Common myeloid progenitor, CD34-positive (primary cell): ENCODE measurements at regions of chr5 and their contacts with region 1.

Region 1: DNA sequence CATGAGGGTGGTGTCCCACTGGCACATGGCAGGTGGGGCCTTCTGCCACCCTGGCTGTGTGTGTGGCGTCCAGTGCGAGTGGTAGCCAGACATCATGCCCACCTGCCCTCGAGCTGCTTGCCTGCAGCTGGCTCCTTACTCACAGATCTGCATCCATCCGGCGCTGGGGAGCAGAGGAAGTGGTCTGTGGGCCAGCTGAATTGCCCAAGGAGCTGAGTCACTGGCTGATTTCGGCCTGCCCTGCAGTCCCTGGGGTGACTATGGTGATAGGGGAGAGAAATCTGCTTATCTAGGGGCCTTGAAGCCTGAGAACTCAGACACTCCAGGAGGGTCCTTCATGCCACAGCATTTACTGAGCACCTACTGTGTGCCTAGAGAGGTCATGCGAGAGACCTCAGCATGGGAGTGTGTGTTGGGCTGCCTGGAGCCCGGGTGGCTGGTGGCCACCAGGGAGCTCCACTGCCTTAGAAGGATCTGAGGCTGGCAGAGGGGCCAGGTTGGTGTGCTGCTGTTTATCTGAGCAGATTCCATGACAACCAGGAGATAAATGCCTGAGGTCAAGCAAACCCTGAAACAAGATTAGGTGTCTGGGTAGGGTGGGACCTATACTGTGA is 57.1 kb downstream of the SLC22A5 start:
- DNase-seq: peak; percentile 92 to 99 (median 99)
- H3K4me3 ChIP-seq: peak overlapping the region in 2 of 7 experiments; percentile 21 to 34
- H3K27ac ChIP-seq: peak overlapping the region; percentile 82 to 93
- H3K4me1 ChIP-seq: peaks cover 82 to 99% (median 99%) of the 10 kb centered on the region in 4 experiments
- H3K27me3 ChIP-seq: no peaks in the 10 kb centered on the region

Region 2: DNA sequence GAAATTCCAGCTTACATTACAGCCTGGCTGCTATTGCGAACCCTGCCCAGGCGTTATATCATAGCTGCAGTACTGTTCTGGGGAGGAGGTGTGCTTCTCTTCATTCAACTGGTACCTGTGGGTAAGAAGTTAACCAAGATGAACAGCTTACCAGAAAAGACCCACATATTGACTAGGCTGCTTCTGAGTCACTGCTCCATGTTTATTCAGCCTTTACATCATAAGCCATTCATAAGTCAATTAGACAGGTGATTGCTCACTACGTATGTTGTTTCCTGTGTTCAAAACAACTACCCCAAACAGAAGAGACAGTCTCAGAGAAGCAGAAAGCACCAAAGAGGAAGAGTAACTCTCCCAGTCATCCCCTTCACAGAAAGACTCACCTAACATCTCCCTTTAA is 91.8 kb before region 1 on chr5:
- CTCF ChIA-PET with region 1: no interaction called
- POLR2A ChIA-PET with region 1: no interaction called
- DNase-seq: peak in 2 of 3 donors; percentile 12 to 31
- H3K4me3 ChIP-seq: no peak overlapping the region
- H3K27ac ChIP-seq: no peak overlapping the region
- H3K4me1 ChIP-seq: no peaks in the 10 kb centered on the region
- H3K27me3 ChIP-seq: no peaks in the 10 kb centered on the region

Region 3: DNA sequence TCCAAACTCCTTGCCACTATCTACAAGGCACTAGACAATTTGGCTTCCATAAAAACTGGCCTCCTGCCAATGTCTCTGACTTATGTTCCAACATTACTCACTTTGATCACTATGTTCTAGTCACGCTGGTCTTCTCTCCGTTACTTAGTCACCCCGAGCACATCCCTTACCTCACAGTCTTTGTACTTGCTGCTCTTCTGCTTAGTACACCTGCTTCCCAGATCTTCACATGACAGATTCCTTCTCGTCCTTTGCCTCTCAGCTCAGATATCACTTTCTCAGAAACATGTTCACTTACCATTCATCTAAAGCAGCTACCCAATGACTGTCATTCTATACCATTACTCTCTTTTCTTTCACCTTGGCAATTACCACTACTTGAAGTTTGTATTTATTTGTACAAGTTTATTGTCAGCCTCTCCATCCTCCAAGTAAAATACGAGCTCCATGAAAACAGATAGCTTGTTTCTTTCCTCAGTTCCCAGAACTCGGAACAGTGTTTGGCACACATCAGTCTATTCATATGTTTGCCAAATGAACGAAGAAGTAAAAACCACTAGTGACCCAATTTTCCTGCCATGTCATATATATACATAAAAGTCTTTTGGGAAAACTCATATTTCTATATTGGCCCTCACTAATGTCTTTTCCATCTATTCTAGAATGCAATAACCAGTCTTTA is 63.1 kb before region 1 on chr5:
- CTCF ChIA-PET with region 1: no interaction called
- POLR2A ChIA-PET with region 1: no interaction called
- DNase-seq: no peak
- H3K4me3 ChIP-seq: no peak overlapping the region
- H3K27ac ChIP-seq: no peak overlapping the region
- H3K4me1 ChIP-seq: no peaks in the 10 kb centered on the region
- H3K27me3 ChIP-seq: no peaks in the 10 kb centered on the region

Region 4: GRCh38 chr5:132437604-132438266 is 11.1 kb after region 1 on chr5:
- CTCF ChIA-PET with region 1: interaction called, 105 read pairs
- POLR2A ChIA-PET with region 1: interaction called, 4 read pairs
- DNase-seq: peak in 2 of 3 donors; percentile 62 to 72
- H3K4me3 ChIP-seq: peak overlapping the region in 1 of 7 experiments; percentile 10
- H3K27ac ChIP-seq: peak overlapping the region; percentile 37 to 75
- H3K4me1 ChIP-seq: peaks cover 16 to 74% (median 62%) of the 10 kb centered on the region in 4 experiments
- H3K27me3 ChIP-seq: no peaks in the 10 kb centered on the region

Region 5: DNA sequence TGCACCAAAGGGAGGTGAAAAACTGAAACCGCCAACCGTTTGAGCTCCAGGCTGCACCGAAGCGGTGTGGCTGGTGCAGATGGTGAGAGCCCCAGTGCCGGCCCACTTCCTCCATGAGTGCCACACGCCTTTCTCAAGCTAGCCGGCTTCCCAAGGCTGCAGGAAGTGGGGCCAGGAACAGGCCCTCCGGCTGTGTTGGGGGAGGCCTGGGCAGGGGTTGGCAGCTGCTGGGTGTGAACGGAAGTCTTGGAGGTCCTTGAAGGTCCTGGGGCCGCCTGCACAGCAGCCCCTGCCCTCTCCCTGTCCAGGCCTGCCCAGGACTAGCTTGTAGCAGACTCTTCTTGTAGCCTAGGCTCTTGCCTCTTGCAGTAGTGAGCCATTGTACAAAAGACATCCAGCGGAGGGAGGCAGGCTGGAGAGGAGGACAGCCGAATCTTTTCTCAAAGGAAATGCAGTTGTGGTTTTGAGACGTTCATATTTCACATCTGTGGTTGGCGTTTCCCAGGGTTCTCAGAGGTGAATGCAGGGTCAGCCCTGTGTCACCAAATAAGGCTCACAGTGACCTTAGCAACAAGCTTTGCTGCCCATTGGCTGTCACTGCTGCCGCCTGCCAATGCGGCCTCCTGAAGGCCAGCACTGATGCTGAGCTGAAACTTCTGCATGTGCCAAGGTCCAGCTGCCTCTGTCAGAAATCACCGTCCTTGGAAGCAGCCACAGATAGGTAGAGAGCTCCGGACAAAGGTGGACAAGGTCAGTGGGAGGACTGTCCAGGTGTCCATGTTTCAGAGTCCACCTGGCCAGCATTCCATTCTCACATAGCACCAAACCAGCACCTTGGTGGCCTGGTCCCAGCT is 40.0 kb after region 1 on chr5:
- CTCF ChIA-PET with region 1: interaction called, 98 read pairs
- POLR2A ChIA-PET with region 1: interaction called, 26 read pairs
- DNase-seq: peak; percentile 88 to 99 (median 98)
- H3K4me3 ChIP-seq: peak overlapping the region in 4 of 7 experiments; percentile 29 to 66 (median 40)
- H3K27ac ChIP-seq: peak overlapping the region; percentile 67 to 69
- H3K4me1 ChIP-seq: peaks cover 45 to 93% (median 87%) of the 10 kb centered on the region in 4 experiments
- H3K27me3 ChIP-seq: no peaks in the 10 kb centered on the region

Region 6: DNA sequence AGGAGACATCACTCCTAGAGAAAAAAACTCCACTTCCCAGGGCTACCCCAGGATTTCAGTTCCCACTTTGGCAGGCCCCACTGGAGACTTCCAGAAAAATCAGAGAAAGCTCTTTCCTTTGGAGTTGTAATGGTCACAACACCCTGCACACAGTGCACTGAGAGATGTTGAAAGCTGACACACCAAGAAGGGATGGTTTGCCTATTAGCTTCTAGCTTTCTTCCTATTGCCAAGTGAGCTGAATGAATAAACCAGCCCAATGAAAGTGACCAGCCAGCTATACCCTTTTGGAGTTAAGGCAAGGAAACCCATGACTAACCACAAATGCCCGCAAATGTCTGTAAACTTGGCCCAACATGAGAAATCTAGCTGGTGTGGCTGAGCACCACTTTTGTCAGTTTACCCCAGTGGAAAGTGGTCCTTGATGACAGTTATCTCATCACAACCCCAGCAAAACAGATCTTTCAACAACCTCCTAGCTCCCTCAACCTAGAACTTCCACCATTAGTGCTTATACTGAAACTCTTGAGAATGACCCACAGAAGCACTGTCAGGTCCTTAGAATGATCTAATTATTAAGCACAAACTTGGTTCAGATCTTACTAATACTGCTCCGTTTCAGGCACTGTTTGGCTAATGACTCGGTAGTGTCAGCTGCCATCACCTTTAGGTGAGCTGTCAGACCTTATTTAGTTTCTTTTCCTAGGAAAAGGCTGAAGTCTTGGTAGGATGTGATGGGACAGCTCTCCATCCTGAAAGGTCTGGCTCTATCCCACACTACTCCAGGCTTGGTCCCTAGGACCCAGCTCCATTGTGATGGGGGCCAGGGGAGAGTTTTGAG is 52.7 kb after region 1 on chr5:
- CTCF ChIA-PET with region 1: interaction called, 47 read pairs
- POLR2A ChIA-PET with region 1: interaction called, 19 read pairs
- DNase-seq: peak in 1 of 3 donors; percentile 42
- H3K4me3 ChIP-seq: no peak overlapping the region
- H3K27ac ChIP-seq: no peak overlapping the region
- H3K4me1 ChIP-seq: peaks cover 3 to 40% (median 34%) of the 10 kb centered on the region in 4 experiments
- H3K27me3 ChIP-seq: no peaks in the 10 kb centered on the region

Region 7: DNA sequence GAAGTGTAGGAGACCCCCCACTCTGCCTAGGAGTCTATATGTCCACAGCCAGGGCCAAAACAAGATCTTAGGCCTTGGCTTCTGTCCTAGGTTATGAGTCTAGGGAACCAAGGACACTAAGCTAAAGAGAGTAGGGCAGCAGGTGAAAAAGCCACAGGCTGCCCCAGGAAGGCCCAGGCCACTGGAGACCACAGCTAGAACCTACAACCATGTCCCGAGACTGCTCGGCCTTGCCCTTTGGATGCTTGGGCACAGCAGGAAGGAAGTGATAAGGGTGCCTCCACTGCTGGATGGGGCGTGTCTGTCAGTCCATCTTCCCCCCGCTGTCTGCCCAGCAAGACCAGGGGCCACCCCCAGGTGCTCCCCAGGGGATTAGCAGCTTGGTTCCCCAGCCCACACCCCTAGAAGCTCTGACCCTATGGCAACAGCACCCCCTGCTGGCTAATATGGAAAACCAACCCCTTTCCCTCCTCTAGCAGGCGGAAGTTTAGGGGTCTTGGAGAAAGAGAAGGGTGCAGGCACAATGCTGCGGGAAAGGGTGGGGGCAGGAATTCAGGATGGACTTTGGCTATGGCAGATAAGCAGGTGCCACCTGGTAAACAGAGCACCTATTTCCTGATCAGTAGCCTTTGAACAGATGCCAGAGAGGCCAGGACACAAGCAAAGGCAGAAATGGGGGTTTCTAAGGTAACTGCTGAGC is 74.4 kb after region 1 on chr5:
- CTCF ChIA-PET with region 1: interaction called, 38 read pairs
- POLR2A ChIA-PET with region 1: interaction called, 6 read pairs
- DNase-seq: peak; percentile 82 to 91 (median 91)
- H3K4me3 ChIP-seq: no peak overlapping the region
- H3K27ac ChIP-seq: peak overlapping the region in 1 of 2 experiments; percentile 35
- H3K4me1 ChIP-seq: peaks cover 0 to 40% (median 29%) of the 10 kb centered on the region in 4 experiments
- H3K27me3 ChIP-seq: no peaks in the 10 kb centered on the region